Sigmoid colon (tissue), 7 donors: ENCODE measurements at regions of chr18 and their contacts with region 1.

Region 1: GRCh38 chr18:79400091-79400590 is 4.4 kb downstream of the NFATC1 start:
- DNase-seq: peak; percentile 85
- H3K4me3 ChIP-seq: peak overlapping the region; percentile 53 to 98 (median 93)
- H3K27ac ChIP-seq: peak overlapping the region; percentile 86 to 91 (median 86)
- H3K4me1 ChIP-seq: peaks cover 0 to 70% (median 62%) of the 10 kb centered on the region in 4 donors
- H3K27me3 ChIP-seq: no peaks in the 10 kb centered on the region
- CTCF ChIP-seq: no peak
- EP300 ChIP-seq: no peak
- POLR2A ChIP-seq: no peak

Region 2: DNA sequence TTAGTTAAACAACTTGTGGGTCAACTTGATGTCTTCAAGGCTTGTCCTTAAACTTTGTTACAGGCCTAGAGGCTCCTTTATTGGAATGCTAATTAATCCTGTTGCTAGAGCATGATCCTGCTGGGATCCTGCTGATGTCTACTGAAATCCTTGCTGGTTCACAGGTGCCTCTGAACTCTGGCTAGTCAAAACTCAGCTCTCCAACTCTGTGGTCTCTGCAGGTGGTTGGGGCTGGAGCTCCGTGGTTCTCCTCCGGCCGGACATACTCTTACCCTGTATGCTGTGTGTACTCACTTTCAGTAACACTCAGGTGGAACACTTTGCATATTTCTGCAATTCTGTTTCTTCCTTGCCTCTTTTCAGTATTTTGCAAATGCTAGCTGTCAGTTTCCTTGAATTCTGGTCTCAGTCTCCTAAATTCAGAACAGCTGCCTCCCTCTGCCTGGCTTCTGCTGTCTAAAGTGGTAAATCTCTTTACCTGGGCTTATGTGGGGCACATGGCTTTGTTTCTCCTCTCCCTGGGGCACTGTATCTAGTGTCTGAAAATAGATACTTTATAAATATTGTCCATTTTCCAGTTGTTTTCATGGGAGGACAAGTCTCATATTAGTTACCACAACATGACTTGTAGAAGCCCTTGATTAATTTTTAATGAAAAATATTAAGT is 218.0 kb before region 1 on chr18:
- intact Hi-C with region 1: no loop called
- DNase-seq: no peak
- H3K4me3 ChIP-seq: no peak overlapping the region
- H3K27ac ChIP-seq: no peak overlapping the region
- H3K4me1 ChIP-seq: no peaks in the 10 kb centered on the region
- H3K27me3 ChIP-seq: no peaks in the 10 kb centered on the region
- CTCF ChIP-seq: no peak
- EP300 ChIP-seq: no peak
- POLR2A ChIP-seq: no peak

Region 3: DNA sequence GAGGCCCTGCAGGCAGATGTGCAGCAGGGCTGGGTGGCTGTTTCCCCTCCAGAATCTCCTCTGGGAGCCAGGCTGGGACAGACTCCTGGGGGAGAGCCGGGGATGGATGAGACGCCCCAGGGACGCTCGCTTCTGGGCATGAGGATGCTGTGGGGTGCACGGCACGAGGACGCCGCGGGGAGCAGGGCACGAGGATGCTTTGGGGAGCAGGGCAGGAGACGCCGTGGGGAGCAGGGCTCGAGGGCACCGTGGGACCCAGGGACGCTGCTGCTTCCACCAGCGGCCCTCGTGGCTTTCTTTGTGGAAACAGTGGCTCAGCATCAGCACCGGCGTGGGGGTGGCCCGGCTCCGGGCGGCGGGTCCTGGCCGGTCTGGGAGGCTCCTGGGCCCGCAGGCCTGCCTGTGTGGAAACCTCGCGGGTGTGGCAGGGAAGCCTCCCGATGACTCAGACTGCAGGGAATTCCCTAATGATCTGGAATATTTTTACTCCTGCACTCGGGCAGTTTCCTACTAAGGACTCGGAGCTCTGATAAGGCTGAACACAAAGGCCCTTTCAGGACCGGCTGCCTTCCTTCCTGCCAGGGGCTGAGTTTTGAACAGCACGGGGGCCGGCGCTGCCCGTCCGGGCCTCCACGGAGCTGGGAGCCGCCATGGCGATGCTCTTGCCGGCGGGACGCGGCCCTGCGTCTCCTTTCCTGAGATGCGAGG is 58.1 kb after region 1 on chr18:
- intact Hi-C with region 1: loop called (anchors 5 kb)
- DNase-seq: peak; percentile 87
- H3K4me3 ChIP-seq: peak overlapping the region in 3 of 4 donors; percentile 2 to 30 (median 22)
- H3K27ac ChIP-seq: peak overlapping the region; percentile 59 to 83 (median 82)
- H3K4me1 ChIP-seq: peaks cover 0 to 36% (median 26%) of the 10 kb centered on the region in 4 donors
- H3K27me3 ChIP-seq: no peaks in the 10 kb centered on the region
- CTCF ChIP-seq: no peak
- EP300 ChIP-seq: no peak
- POLR2A ChIP-seq: no peak

Region 4: DNA sequence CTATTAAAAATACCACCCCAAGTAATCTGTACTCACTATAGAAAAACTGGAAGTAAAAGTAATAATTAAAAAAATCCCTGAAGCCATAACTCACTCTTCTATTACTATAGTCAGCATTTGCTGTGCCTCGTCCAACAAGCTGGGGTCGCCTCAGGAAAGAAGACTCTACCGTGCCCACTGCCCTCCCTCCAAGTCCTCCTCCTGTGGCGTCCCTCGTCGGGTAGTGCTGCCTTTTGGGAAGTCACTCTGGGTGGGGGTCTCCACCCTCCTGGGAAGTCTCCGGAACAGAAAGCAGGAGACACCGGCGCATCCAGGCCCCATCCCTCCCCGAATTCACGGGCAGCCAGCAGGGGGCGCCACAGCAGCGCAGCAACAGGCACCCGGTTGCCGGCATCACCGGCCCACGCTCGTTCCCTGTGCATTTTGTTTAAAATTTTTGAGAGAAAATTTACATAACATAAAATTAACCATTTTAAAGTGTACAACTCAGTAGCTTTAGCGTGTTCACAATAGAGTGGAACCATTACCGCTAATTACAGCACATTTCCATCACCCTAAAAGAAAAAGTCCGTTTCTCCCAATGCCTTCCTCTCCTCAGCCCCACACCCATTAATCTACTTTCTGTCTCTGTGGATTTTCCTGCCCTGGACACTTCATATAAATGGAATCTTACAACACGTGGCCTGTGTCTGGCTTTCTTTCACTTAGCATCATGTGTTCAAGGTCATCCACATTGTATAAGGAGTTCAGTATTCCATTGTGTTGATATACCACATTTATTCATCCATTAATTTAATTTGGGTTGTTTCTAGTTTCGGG is 771.1 kb after region 1 on chr18:
- intact Hi-C with region 1: no loop called
- DNase-seq: no peak
- H3K4me3 ChIP-seq: peak overlapping the region in 3 of 4 donors; percentile 20 to 44 (median 39)
- H3K27ac ChIP-seq: peak overlapping the region in 3 of 4 donors; percentile 36 to 61 (median 38)
- H3K4me1 ChIP-seq: peaks cover 0 to 17% (median 0%) of the 10 kb centered on the region in 4 donors
- H3K27me3 ChIP-seq: no peaks in the 10 kb centered on the region
- CTCF ChIP-seq: peak; percentile 66 to 91 (median 78)
- EP300 ChIP-seq: no peak
- POLR2A ChIP-seq: no peak